Activated CD8-positive, alpha-beta memory T cell treated with anti-CD3 and anti-CD28 coated beads, Interleukin-2, amount 10 ng/mL, durations not matched to agents 7 days and 5 days (primary cell): ENCODE measurements at regions of chr6 and their contacts with region 1.

Region 1: DNA sequence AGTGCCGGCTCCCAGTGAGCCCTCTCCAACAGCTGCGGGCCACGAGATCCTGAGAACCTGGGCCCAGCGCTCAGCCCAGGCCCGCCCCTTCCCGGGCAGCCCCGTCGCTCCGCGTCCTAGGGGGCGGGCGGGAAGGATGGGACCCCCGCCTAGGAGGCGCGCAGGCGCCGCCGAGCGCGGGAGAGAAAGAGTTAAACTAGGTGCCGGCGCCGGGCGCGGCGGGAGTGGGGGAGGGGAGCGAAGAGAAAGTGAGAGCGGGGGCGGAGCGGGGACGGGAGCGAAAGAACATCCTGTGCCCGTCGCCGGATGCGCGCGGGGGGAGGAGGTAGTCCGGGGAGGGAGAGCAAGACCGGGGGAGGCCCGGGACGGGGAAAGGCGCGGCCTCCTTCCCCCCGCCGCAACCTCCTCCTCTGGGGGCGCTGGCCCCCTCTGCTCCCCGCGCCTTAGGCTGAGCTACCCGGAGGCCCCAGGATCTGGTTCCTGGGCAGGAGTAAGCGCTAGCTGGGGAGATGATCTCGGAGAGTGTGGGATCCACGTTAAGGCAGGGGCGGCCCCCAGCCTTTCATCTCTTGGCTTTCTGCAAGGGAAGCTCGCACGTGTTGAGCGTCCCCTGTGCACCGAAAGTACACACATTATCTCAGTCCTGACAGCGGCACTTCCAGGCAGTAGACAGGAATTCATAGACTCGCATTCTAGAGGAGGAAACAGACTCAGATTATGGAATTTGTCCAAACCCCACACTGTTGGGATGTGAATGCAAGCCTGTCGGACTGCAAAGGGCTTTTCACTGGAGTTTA is 4.9 kb upstream of the ARMC12 start:
- DNase-seq: peak; percentile 97
- ATAC-seq: peak; percentile 67
- H3K4me3 Mint-ChIP-seq: peak overlapping the region; percentile 84
- H3K27ac Mint-ChIP-seq: peak overlapping the region; percentile 96
- H3K4me1 Mint-ChIP-seq: peaks cover 66% of the 10 kb centered on the region
- H3K27me3 Mint-ChIP-seq: no peaks in the 10 kb centered on the region

Region 2: DNA sequence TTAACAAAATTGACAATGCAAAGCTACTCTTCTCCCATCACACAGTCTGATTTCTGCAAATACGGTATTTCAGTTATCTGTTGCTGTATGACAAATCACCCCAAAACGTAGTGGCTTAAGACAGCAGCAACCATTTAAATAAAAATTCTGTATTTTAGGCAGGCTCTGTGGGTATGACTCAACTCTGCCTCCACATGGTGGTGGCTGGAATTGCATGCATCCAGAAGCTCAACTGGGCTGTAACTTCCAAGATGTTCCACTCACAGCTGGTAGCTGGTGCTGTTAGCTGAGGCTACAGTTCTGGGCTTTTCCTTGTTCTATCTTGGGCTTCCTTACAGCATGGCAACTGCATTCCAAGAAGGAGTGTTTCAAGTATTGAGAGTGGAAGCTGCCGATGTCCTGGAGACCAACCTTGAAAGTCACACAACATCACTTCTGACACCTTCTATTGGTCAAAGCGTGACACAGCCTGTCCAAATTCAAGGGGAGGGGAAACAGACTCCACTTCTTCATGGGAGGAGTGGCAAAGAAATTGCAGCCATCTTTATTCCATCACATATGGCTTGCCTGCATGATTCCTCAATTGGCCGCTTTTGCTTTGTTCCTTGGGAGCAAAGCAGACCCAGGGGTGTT is 179.5 kb before region 1 on chr6:
- CTCF ChIA-PET with region 1: interaction called, 23 read pairs
- DNase-seq: peak; percentile 78
- ATAC-seq: peak; percentile 53
- H3K4me3 Mint-ChIP-seq: no peak overlapping the region
- H3K27ac Mint-ChIP-seq: no peak overlapping the region
- H3K4me1 Mint-ChIP-seq: no peaks in the 10 kb centered on the region
- H3K27me3 Mint-ChIP-seq: peaks cover 14% of the 10 kb centered on the region

Region 3: DNA sequence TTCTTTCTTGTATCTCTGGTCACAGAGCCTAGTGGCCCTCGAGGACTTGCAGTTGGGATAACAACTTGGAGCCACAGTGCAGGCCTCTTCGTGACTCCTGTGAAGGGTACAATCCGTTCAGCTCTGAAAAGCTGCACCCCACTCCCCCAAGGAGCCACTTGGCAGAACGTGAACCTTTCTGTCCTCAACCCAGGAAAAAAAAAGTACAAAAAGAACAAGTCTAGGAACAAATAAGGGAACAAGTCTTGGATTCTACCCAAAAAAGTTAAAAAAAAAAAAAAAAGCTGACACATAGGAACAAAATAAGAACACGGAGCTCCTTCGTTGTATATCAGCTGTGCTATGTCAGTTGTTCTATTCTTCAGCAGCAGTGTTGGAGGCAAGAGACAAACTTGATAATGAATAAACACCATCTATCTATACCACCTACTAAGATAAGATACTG is 141.3 kb before region 1 on chr6:
- CTCF ChIA-PET with region 1: interaction called, 180 read pairs
- DNase-seq: no peak
- ATAC-seq: no peak
- H3K4me3 Mint-ChIP-seq: no peak overlapping the region
- H3K27ac Mint-ChIP-seq: no peak overlapping the region
- H3K4me1 Mint-ChIP-seq: peaks cover 25% of the 10 kb centered on the region
- H3K27me3 Mint-ChIP-seq: no peaks in the 10 kb centered on the region

Region 4: DNA sequence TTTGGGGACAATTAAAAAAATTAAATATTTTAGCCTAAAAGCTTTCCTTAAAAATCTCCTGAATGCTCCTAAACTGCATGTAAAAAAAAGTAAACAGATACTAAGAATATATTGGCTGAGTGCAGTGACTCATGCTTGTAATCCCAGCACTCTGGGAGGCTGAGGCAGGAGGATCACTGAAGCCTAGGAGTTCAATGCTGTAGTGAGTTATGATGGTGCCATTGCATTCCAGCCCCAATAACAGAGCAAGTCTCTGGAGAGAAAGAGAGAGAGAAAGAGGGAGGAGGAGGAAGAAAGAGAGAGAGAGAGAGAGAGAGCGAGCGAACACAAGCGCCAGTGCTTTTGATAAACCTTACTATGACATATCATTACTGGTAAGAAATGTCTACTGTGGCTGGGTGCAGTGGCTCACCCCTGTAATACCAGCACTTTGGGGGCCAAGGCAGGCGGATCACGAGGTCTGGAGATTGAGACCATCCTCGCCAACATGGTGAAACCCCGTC is 102.0 kb before region 1 on chr6:
- CTCF ChIA-PET with region 1: interaction called, 13 read pairs
- DNase-seq: no peak
- ATAC-seq: no peak
- H3K4me3 Mint-ChIP-seq: no peak overlapping the region
- H3K27ac Mint-ChIP-seq: no peak overlapping the region
- H3K4me1 Mint-ChIP-seq: peaks cover 8% of the 10 kb centered on the region
- H3K27me3 Mint-ChIP-seq: no peaks in the 10 kb centered on the region

Region 5: DNA sequence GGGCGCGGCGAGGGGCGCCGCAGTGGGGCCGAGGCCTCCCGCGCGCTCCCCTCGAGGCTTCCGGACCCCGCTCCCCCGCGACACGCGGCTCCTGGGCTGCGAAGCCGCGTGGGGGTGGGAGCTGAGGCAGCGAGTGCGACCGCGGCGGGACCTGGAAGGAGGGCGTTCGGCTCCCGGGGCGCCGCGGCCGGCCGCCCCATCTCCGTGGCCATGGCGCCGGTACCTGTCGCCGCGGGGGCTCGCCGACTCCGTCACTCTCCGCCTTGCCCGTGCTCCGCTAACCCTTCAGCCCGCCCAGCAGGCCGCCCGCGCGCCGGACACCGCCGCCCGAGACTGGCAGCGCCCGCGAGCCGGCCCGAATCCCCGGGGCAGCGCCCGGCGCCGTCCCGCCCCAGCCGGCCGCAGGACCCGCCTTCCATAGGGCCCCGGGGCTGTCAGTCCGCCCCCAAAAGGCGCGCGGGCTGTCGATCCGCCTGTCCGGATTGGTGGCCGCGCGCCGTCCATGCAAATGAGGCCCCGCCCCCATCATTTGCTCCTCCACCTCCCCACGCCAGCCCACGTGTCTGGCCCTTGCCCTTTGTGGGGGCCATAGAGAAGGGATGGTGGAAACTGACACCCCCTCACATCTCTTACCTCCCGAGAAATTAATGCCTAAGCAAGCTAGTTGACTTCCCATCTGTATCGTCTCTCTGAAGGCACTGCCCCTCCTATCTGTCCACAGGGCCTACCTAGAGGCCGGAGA is 43.2 kb before region 1 on chr6 and contains the start of gene FKBP5:
- CTCF ChIA-PET with region 1: interaction called, 195 read pairs
- DNase-seq: peak; percentile 95
- ATAC-seq: peak; percentile 95
- H3K4me3 Mint-ChIP-seq: peak within 1 kb of the TSS; percentile 89
- H3K27ac Mint-ChIP-seq: peak within 1 kb of the TSS; percentile 89
- H3K4me1 Mint-ChIP-seq: peaks cover 18% of the 10 kb centered on the region
- H3K27me3 Mint-ChIP-seq: no peaks in the 10 kb centered on the region
- total RNA-seq, gene FKBP5: 53.8 to 70.6 TPM

Region 6: DNA sequence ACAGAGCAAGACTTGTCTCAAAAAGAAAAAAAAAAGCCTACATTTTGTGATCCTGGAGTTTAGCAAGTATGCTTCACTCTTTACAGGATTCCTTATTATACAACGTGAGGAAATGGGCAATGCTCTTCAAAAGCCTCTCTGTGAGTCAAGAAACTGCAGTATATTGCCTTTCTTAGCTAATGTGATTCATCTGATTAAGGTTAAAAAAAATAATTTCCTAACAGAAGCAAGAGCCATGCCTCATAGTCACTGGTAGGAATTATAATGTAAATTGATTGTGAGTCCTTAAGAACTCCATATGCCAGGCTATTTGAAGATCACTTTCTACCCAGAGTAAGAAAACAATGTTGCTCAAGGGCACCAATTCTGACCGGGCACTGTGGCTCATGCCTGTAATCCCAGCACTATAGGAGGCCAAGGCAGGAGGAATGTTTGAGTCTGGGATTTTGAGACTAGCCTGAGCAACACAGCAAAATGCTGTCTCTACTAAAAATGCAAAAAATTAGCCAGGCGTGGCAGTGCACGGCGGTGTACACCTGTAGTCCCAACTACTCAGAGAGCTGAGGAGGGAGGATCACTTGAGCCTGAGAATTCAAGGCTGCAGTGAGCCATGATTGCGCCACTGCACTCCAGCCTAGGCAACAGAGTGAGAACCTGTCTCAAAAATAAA is 249.2 kb after region 1 on chr6:
- CTCF ChIA-PET with region 1: no interaction called
- DNase-seq: no peak
- ATAC-seq: no peak
- H3K4me3 Mint-ChIP-seq: no peak overlapping the region
- H3K27ac Mint-ChIP-seq: no peak overlapping the region
- H3K4me1 Mint-ChIP-seq: no peaks in the 10 kb centered on the region
- H3K27me3 Mint-ChIP-seq: peaks cover 27% of the 10 kb centered on the region